GM12878 (cell line): ENCODE measurements at regions of chrX and their contacts with region 1.

Region 1: GRCh38 chrX:151151665-151152267 is 24.6 kb upstream of the GPR50 start:
- DNase-seq: no peak
- ATAC-seq: peak; percentile 91
- H3K4me3 ChIP-seq: no peak overlapping the region
- H3K27ac ChIP-seq: no peak overlapping the region
- H3K4me1 ChIP-seq: no peaks in the 10 kb centered on the region
- H3K27me3 ChIP-seq: no peaks in the 10 kb centered on the region
- CTCF ChIP-seq: peak; percentile 72 to 84 (median 81)
- EP300 ChIP-seq: no peak
- POLR2A ChIP-seq: no peak
- RAD21 ChIP-seq: peak; percentile 92

Region 2: DNA sequence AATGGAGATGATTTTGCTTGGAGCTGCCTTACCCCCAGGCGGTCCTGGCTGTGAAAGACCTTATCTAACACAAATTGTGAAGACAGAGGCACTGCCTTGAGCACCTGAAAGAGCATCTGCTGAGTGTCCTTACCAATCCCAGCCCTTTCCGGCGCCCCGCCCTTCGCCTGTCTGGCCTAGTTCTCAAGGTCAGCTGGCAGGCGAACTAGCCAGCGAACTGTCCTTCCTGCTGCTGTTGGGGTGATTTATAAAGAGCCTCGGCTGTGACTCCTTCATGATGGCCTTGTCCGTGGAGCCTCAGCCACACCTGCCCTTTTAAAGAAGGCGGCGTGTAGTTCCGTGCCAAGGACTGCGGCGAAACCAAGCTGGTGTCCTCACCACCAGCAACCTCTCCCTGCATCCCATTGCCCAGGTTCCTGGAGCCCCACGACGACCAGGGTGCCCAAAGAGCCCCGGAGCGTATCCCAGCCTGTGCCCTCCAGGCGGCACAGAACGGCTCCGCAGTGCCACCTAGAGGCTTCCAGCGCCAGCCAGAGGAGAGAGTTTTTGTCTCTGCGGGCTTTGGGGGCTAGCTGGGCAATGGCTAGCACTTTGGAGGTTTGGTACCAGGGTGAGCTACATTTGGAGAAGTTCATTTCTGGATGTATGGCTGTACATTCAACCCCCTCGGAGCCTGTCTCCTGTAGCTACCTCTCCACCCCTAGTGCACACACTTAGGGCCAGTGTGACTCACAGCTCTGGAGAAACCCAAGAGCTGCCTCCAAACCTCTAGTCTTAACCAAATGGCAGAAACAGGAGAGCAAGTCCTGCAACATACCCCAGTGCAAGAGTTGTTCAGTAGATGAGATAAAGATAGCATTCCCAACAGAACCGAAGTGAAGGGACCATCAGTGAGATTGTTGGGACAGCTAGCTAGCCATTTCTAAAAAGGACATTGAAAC is 208.4 kb after region 1 on chrX:
- CTCF ChIA-PET with region 1: interaction called, 18 read pairs
- POLR2A ChIA-PET with region 1: no interaction called
- RAD21 ChIA-PET with region 1: interaction called, 10 read pairs
- SMC1A ChIA-PET with region 1: interaction called, 5 read pairs
- in situ Hi-C with region 1: no loop called
- intact Hi-C with region 1: loop called (anchors 1 kb)
- DNase-seq: no peak
- ATAC-seq: peak; percentile 97
- H3K4me3 ChIP-seq: no peak overlapping the region
- H3K27ac ChIP-seq: no peak overlapping the region
- H3K4me1 ChIP-seq: no peaks in the 10 kb centered on the region
- H3K27me3 ChIP-seq: no peaks in the 10 kb centered on the region
- CTCF ChIP-seq: peak; percentile 59 to 80 (median 73)
- EP300 ChIP-seq: no peak
- POLR2A ChIP-seq: no peak
- RAD21 ChIP-seq: peak; percentile 51

Region 3: GRCh38 chrX:151458824-151459223 is 307.1 kb after region 1 on chrX:
- CTCF ChIA-PET with region 1: no interaction called
- POLR2A ChIA-PET with region 1: no interaction called
- RAD21 ChIA-PET with region 1: no interaction called
- SMC1A ChIA-PET with region 1: no interaction called
- in situ Hi-C with region 1: no loop called
- intact Hi-C with region 1: no loop called
- DNase-seq: no peak
- ATAC-seq: no peak
- H3K4me3 ChIP-seq: no peak overlapping the region
- H3K27ac ChIP-seq: no peak overlapping the region
- H3K4me1 ChIP-seq: no peaks in the 10 kb centered on the region
- H3K27me3 ChIP-seq: no peaks in the 10 kb centered on the region
- CTCF ChIP-seq: no peak
- EP300 ChIP-seq: no peak
- POLR2A ChIP-seq: no peak
- RAD21 ChIP-seq: no peak

Region 4: DNA sequence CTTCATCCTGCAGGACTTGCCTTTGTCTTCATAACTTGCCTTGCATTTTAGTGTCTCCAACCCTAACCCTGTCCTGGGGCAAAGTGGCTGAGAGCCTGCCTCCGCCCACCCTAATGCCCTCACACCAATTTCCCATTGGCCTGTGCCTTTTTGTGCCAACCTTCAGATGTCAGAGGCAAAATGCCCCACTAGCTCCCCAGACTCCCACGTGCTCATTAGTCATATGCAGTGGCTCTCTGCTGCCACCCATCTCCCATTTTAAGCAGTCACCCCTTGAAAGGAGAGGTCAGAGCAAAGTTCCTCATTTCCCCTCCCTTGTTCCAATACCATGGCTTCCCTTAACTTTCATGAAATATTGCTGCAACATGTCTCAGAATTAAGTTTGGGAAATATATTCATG is 336.9 kb after region 1 on chrX:
- CTCF ChIA-PET with region 1: interaction called, 3 read pairs
- POLR2A ChIA-PET with region 1: no interaction called
- RAD21 ChIA-PET with region 1: no interaction called
- SMC1A ChIA-PET with region 1: no interaction called
- in situ Hi-C with region 1: loop called (anchors 10 kb)
- intact Hi-C with region 1: loop called (anchors 1 kb)
- DNase-seq: no peak
- ATAC-seq: peak; percentile 78
- H3K4me3 ChIP-seq: no peak overlapping the region
- H3K27ac ChIP-seq: no peak overlapping the region
- H3K4me1 ChIP-seq: no peaks in the 10 kb centered on the region
- H3K27me3 ChIP-seq: no peaks in the 10 kb centered on the region
- CTCF ChIP-seq: peak; percentile 46 to 58 (median 54); a peak in 5 of 6 replicates
- EP300 ChIP-seq: no peak
- POLR2A ChIP-seq: no peak
- RAD21 ChIP-seq: peak; percentile 55

Region 5: GRCh38 chrX:151680805-151681204 is 529.0 kb after region 1 on chrX:
- CTCF ChIA-PET with region 1: interaction called, 37 read pairs
- POLR2A ChIA-PET with region 1: no interaction called
- RAD21 ChIA-PET with region 1: interaction called, 11 read pairs
- SMC1A ChIA-PET with region 1: interaction called, 4 read pairs
- in situ Hi-C with region 1: loop called (anchors 5 kb)
- intact Hi-C with region 1: loop called (anchors 1 kb)
- DNase-seq: peak; percentile 12
- ATAC-seq: peak; percentile 99
- H3K4me3 ChIP-seq: no peak overlapping the region
- H3K27ac ChIP-seq: no peak overlapping the region
- H3K4me1 ChIP-seq: no peaks in the 10 kb centered on the region
- H3K27me3 ChIP-seq: 0 out of 4 replicates have a peak, but pooled peaks cover 0 to 2% of the 10 kb centered on the region in 2 experiments
- CTCF ChIP-seq: peak; percentile 73 to 83 (median 80)
- EP300 ChIP-seq: no peak
- POLR2A ChIP-seq: no peak
- RAD21 ChIP-seq: peak; percentile 92

Region 6: DNA sequence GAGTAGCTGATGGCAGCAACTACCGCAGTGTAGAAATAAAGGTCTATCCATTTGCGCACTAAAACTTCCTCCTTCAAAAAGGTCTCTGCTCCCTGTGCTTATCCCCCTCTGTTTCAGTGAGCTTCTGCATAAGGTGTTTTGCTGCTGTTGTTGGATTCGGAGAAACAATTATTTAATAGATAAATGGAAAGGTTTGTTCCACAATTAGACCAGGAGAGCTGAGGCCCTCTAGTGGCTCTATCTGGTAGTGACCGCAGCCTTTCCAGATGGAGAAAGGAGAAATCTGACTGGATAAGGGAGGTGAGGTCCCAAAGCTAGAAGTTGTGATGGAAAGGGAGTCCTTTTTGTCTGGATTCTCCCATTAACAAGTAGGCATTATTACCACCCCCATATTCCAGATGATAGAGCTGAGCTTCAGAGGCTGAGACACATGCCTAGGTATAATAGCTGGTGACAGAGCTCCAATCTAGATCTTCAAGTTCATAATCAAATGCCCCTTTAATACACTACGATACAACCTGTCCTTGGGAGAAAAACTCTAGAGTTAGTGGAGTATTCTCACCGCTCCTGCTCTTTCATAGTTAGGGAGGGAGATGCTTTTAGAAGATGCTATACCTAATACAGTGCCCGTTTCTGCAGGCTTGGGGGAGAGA is 1480.8 kb after region 1 on chrX:
- CTCF ChIA-PET with region 1: interaction called, 3 read pairs
- POLR2A ChIA-PET with region 1: no interaction called
- RAD21 ChIA-PET with region 1: no interaction called
- SMC1A ChIA-PET with region 1: interaction called, 3 read pairs
- in situ Hi-C with region 1: no loop called
- intact Hi-C with region 1: loop called (anchors 5 kb)
- DNase-seq: no peak
- ATAC-seq: peak; percentile 60
- H3K4me3 ChIP-seq: no peak overlapping the region
- H3K27ac ChIP-seq: no peak overlapping the region
- H3K4me1 ChIP-seq: no peaks in the 10 kb centered on the region
- H3K27me3 ChIP-seq: no peaks in the 10 kb centered on the region; a peak in 2 of 4 replicates
- CTCF ChIP-seq: peak; percentile 70 to 92 (median 80)
- EP300 ChIP-seq: no peak
- POLR2A ChIP-seq: no peak
- RAD21 ChIP-seq: peak; percentile 66